Activated CD4-positive, alpha-beta memory T cell treated with anti-CD3 and anti-CD28 coated beads for 36 hours (primary cell): ENCODE measurements at regions of chr2 and their contacts with region 1.

Region 1: GRCh38 chr2:218659258-218659987 is at the starts of genes BCS1L and ZNF142:
- DNase-seq: peak; percentile 98
- H3K4me3 Mint-ChIP-seq: peak within 1 kb of the TSS; percentile 93
- H3K27ac Mint-ChIP-seq: peak within 1 kb of the TSS; percentile 80
- H3K4me1 Mint-ChIP-seq: peaks cover 26% of the 10 kb centered on the region
- H3K27me3 Mint-ChIP-seq: no peaks in the 10 kb centered on the region
- total RNA-seq, gene BCS1L: 57.1 to 64.5 TPM
- total RNA-seq, gene ZNF142: 33.7 to 34.8 TPM

Region 2: DNA sequence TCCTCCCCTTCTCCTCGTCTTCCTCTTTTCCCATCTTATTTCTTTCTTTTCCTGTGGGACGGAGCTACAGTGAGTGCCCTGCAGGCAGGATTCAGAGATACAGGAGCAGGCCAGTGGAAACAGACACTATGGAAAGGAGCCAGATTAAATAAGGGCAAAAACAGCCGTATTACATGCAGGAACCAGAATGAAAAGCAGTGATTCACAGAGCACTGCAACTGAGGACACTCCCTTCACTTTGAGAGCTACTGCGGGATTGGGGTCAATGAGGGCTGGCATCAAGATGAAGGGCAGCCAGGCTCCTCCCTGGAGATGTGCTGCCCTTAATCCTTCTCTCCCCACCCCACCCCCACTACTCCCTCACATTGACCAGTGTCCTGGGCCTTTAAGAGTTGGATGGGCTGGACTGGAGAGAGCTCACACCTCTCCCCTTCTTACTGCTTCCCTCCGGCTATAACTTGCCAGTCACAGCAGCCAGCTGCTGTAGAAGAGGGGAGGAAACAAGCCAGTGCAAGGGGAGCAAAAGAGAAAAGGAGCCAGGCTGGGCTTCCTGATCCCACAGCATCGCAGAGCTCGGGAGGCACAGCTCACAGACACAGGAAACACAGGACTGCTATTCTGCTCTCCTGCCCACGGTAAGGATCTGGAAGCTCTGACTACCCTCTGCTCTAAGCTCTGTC is 51.8 kb before region 1 on chr2 and contains the start of gene PLCD4:
- CTCF ChIA-PET with region 1: no interaction called
- POLR2A ChIA-PET with region 1: no interaction called
- intact Hi-C with region 1: no loop called
- DNase-seq: no peak
- H3K4me3 Mint-ChIP-seq: no peak within 1 kb of the TSS
- H3K27ac Mint-ChIP-seq: no peak within 1 kb of the TSS
- H3K4me1 Mint-ChIP-seq: no peaks in the 10 kb centered on the region
- H3K27me3 Mint-ChIP-seq: peaks cover 9% of the 10 kb centered on the region
- total RNA-seq, gene PLCD4: 0.51 to 0.78 TPM

Region 3: GRCh38 chr2:218648088-218648786 is 11.2 kb before region 1 on chr2:
- CTCF ChIA-PET with region 1: interaction called, 38 read pairs
- POLR2A ChIA-PET with region 1: interaction called, 6 read pairs
- intact Hi-C with region 1: no loop called
- DNase-seq: peak; percentile 66
- H3K4me3 Mint-ChIP-seq: no peak overlapping the region
- H3K27ac Mint-ChIP-seq: no peak overlapping the region
- H3K4me1 Mint-ChIP-seq: peaks cover 9% of the 10 kb centered on the region
- H3K27me3 Mint-ChIP-seq: no peaks in the 10 kb centered on the region

Region 4: DNA sequence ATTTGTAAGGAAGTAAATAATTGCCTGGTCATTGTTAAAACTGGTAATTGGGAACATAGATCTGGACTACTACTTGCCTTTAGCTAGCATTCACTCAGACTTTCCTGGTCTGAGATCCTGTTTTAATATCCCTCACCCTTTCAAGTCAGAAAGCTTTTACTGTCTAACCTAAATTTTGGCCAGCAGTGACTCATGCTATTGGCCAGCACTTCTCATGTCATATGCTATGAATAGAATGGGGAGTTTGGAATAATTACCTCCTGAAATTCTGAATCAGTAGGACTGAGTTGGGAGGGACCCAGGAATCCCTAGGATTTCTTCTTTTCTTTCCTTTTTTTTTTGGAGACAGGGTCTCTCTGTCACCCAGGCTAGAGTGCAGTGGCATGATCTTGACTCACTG is 31.8 kb after region 1 on chr2:
- CTCF ChIA-PET with region 1: interaction called, 12 read pairs
- POLR2A ChIA-PET with region 1: interaction called, 4 read pairs
- intact Hi-C with region 1: no loop called
- DNase-seq: no peak
- H3K4me3 Mint-ChIP-seq: no peak overlapping the region
- H3K27ac Mint-ChIP-seq: no peak overlapping the region
- H3K4me1 Mint-ChIP-seq: no peaks in the 10 kb centered on the region
- H3K27me3 Mint-ChIP-seq: no peaks in the 10 kb centered on the region

Region 5: DNA sequence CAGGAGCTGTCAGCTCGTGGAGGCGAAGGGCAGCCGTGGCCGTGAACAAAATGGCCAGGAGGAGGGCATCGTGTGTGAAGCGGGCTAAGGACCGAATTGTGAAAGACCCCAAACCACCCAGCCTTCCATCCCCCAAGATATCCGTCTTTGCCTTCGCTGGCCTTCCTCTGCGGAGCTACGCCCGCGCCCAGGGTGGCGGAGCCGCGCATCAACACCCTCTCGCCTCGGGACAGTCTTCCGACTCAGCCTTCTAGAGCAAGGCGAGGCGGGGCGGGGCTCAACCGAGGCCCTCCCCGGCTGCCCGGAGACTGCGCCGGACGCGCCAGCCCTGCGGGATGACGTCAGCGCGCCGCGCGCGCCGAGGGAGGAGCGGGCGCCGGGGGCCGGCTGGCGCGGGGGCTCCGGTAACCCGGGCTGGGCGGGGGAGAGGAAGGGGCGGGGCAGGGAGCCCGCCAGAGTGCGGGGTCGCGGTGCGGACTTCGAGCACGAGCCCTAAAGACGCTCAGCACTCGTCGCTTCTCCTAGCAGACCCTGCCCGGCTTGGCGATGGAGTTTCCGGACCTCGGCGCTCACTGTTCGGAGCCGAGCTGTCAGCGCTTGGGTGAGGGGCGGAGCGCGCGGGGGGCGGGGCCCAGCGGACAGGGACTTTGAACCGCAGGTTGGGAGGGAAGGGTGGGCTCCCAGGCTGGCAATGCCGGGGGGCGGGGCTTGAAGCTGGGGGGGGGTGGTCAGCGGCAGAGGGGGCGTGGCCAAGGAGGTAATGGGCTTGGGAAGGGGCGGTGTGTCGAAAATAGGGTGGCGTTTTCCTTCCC is 547.2 kb after region 1 on chr2 and contains the start of gene ZFAND2B:
- CTCF ChIA-PET with region 1: no interaction called
- POLR2A ChIA-PET with region 1: no interaction called
- intact Hi-C with region 1: loop called (anchors 1 kb)
- DNase-seq: peak; percentile 95
- H3K4me3 Mint-ChIP-seq: peak within 1 kb of the TSS; percentile 94
- H3K27ac Mint-ChIP-seq: peak within 1 kb of the TSS; percentile 99
- H3K4me1 Mint-ChIP-seq: peaks cover 32% of the 10 kb centered on the region
- H3K27me3 Mint-ChIP-seq: no peaks in the 10 kb centered on the region
- total RNA-seq, gene ZFAND2B: 31.9 to 34.4 TPM

Region 6: DNA sequence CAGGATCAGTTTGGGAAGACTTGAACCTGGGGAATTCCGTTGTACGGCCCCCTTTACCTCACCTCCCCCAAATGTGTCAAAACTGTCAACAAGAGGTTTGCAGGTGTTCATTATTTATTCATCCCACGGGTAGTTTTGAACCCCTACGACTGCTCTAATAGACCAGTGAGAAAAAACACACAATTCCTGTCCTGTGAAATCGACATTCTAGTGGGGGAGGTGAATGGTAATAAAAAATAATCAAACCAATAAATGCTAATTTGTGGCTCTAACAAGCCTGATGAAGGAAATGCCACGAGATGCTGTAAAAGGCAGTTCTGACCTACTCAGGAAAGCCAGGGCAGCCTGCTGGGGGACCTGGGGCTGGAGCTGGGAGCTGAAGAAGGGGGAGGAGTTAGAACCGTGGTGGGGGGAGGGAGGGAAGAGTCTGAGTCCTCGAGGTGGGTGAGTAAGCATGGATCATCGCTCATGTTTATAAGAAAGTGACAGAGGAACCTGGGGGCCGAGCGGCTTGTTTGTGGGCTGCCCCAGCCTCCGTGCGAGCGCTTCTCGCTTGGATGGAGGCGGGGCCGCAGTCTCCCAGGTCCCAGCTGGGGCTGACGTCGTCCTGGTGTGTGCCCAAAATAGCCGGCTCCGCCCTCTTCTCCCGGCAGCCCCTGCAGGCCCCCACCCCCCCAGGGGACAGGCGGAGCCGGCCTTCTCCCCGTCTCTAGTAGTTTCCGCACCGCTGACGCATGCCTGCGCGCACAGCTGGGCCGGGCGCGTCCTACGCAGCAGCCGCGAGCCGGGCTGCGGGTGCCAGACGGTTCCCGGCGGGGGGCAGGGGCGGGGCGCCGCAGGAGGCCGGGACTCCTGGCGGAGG is 619.5 kb after region 1 on chr2 and contains the start of gene DNAJB2:
- CTCF ChIA-PET with region 1: no interaction called
- POLR2A ChIA-PET with region 1: no interaction called
- intact Hi-C with region 1: loop called (anchors 1 kb)
- DNase-seq: peak; percentile 100
- H3K4me3 Mint-ChIP-seq: peak within 1 kb of the TSS; percentile 80
- H3K27ac Mint-ChIP-seq: peak within 1 kb of the TSS; percentile 95
- H3K4me1 Mint-ChIP-seq: peaks cover 43% of the 10 kb centered on the region
- H3K27me3 Mint-ChIP-seq: no peaks in the 10 kb centered on the region
- total RNA-seq, gene DNAJB2: 37.3 to 39.1 TPM